Heart left ventricle (tissue), 16 donors: ENCODE measurements at regions of chr12 and their contacts with region 1.

Region 1: GRCh38 chr12:7219599-7220243 is 30.2 kb downstream of the PEX5 start:
- DNase-seq: peak in 4 of 5 donors; percentile 59 to 69 (median 64)
- ATAC-seq: peak in 3 of 4 donors; percentile 41 to 72 (median 58)
- H3K4me3 ChIP-seq: no peak overlapping the region
- H3K27ac ChIP-seq: no peak overlapping the region
- H3K4me1 ChIP-seq: no peaks in the 10 kb centered on the region
- H3K27me3 ChIP-seq: no peaks in the 10 kb centered on the region
- CTCF ChIP-seq: peak; percentile 68 to 94 (median 86)
- POLR2A ChIP-seq: no peak

Region 2: DNA sequence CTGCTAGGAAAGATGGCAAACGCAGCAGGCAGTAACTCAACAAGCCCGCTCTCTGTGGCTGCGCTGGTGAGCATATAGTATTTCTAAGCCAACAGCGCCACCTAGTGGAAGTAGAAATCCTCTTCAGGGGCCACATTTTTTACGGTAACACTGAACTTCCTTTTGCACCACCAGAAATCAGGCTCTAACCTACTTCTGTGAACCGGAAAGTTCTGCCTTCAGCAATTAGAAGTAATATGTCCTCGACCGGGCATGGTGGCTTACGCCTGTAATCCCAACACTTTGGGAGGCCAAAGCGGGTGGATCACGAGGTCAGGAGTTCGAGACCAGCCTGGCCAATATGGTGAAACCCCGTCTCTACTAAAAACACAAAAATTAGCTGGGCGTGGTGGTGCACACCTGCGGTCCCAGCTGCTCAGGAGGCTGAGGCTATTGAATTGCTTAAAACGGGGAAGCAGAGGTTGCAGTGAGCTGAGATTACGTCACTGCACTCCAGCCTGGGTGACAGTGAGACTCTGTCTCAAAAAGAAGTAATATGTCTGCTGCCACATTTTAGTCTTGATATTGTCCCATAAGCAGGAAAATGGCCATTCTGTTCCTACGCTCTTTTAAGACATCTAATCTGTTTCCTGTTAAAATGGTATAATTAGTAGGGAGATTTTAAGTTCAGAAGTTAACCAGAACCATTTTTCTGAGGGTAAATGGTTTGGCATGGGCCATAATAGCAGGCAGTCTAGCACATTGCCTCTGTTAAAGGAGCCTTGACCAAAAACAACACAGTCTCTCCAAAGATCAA is 419.2 kb after region 1 on chr12:
- intact Hi-C with region 1: loop called (anchors 1 to 2 kb)
- DNase-seq: peak; percentile 70 to 74 (median 72)
- ATAC-seq: peak; percentile 93 to 97 (median 96)
- H3K4me3 ChIP-seq: peak overlapping the region in 6 of 12 donors; percentile 20 to 55 (median 50)
- H3K27ac ChIP-seq: peak overlapping the region in 1 of 12 donors; percentile 69
- H3K4me1 ChIP-seq: peaks cover 0 to 14% (median 0%) of the 10 kb centered on the region in 12 donors
- H3K27me3 ChIP-seq: peaks cover 0 to 33% (median 4%) of the 10 kb centered on the region in 9 donors
- CTCF ChIP-seq: peak; percentile 80 to 96 (median 86)
- POLR2A ChIP-seq: no peak

Region 3: GRCh38 chr12:7731486-7731885 is 511.8 kb after region 1 on chr12:
- intact Hi-C with region 1: no loop called
- DNase-seq: no peak
- ATAC-seq: no peak
- H3K4me3 ChIP-seq: no peak overlapping the region
- H3K27ac ChIP-seq: no peak overlapping the region
- H3K4me1 ChIP-seq: no peaks in the 10 kb centered on the region
- H3K27me3 ChIP-seq: no peaks in the 10 kb centered on the region
- CTCF ChIP-seq: no peak
- POLR2A ChIP-seq: no peak